ENCODE measurements at regions of chr18 and their contacts with region 1.

Region 1: DNA sequence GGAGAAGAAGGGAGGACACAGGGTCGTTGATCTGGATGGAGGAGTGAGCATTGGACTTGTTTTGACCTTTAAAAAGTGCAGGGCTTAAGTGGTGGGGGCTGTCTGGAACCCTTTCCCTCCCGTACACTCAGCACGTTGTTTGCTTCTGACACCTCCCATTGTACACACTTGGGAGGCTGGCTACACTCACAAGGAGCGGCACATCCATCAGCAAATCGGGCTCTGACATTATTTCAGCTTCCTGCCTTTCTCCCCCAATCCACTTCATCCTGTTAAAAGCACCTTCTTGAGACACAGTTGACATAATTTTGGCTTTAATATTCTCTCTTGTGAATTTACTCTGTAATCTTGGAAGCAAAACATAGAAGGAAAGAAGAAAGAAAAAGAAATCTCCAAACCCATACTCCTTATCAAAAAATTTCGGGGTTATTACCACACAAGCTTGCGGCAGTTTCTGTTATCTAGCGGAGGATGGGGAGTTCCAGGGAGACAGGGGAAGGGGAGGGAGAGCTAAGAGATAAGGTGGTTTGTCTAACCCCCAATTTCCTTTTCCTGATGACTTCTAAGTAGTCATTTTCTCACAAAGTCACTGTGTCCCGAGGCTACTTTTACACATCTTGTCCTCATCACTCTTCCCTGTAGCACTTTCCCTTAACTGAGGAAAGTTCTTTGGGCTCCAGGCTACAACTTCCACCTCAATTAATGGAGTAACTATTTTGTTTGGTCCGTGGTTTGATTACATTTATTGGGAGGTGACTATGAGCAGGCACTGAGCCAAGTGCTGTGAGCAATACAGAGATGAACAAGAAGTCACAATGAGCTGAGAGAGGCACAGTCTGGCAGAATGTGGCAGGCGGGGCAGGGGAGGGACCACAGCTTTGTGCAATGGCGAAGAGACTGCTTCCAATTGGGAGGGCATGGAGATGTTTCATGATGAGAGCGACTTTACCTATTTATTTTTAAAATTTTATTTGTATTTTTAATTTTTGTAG is 240.1 kb upstream of the MEX3C start:
- DNase-seq: no peak
- H3K4me3 Mint-ChIP-seq: peak overlapping the region; percentile 37
- H3K27ac Mint-ChIP-seq: no peak overlapping the region
- H3K4me1 Mint-ChIP-seq: peaks cover 28% of the 10 kb centered on the region
- H3K27me3 Mint-ChIP-seq: peaks cover 39% of the 10 kb centered on the region

Region 2: GRCh38 chr18:51522821-51523220 is 85.2 kb after region 1 on chr18:
- intact Hi-C with region 1: loop called (anchors 5 kb)
- DNase-seq: no peak
- H3K4me3 Mint-ChIP-seq: no peak overlapping the region
- H3K27ac Mint-ChIP-seq: no peak overlapping the region
- H3K4me1 Mint-ChIP-seq: peaks cover 13% of the 10 kb centered on the region
- H3K27me3 Mint-ChIP-seq: peaks cover 1% of the 10 kb centered on the region

Measured in activated T-helper 2 cell treated with anti-CD3 and anti-CD28 coated beads, Interferon-gamma antibody, Interleukin-2, Interleukin-4, amounts not matched to agents 10 μg/mL and 5 μg/mL and 100 μg/mL, durations not matched to agents 14 hours and 24 hours and 36 hours (primary cell).